ENCODE measurements at regions of chr4 and their contacts with region 1.

Region 1: GRCh38 chr4:150242820-150243458 is 164.7 kb downstream of the DCLK2 start:
- DNase-seq: peak in 1 of 2 experiments; percentile 51
- H3K4me3 ChIP-seq: no peak overlapping the region
- H3K4me3 Mint-ChIP-seq: no peak overlapping the region
- H3K27ac Mint-ChIP-seq: no peak overlapping the region
- H3K4me1 ChIP-seq: no peaks in the 10 kb centered on the region
- H3K4me1 Mint-ChIP-seq: no peaks in the 10 kb centered on the region
- H3K27me3 ChIP-seq: no peaks in the 10 kb centered on the region
- H3K27me3 Mint-ChIP-seq: no peaks in the 10 kb centered on the region
- CTCF ChIP-seq: peak; percentile 80 to 88

Region 2: GRCh38 chr4:149914119-149915115 is 328.5 kb before region 1 on chr4:
- CTCF ChIA-PET with region 1: no interaction called
- POLR2A ChIA-PET with region 1: no interaction called
- intact Hi-C with region 1: loop called (anchors 5 kb)
- DNase-seq: peak; percentile 46 to 62
- H3K4me3 ChIP-seq: no peak overlapping the region
- H3K4me3 Mint-ChIP-seq: no peak overlapping the region
- H3K27ac Mint-ChIP-seq: no peak overlapping the region
- H3K4me1 ChIP-seq: no peaks in the 10 kb centered on the region
- H3K4me1 Mint-ChIP-seq: no peaks in the 10 kb centered on the region
- H3K27me3 ChIP-seq: no peaks in the 10 kb centered on the region
- H3K27me3 Mint-ChIP-seq: no peaks in the 10 kb centered on the region
- CTCF ChIP-seq: peak; percentile 59 to 67

Region 3: GRCh38 chr4:149980941-149981340 is 262.0 kb before region 1 on chr4:
- CTCF ChIA-PET with region 1: no interaction called
- POLR2A ChIA-PET with region 1: no interaction called
- intact Hi-C with region 1: loop called (anchors 1 kb)
- DNase-seq: peak; percentile 35 to 50
- H3K4me3 ChIP-seq: no peak overlapping the region
- H3K4me3 Mint-ChIP-seq: no peak overlapping the region
- H3K27ac Mint-ChIP-seq: no peak overlapping the region
- H3K4me1 ChIP-seq: no peaks in the 10 kb centered on the region
- H3K4me1 Mint-ChIP-seq: no peaks in the 10 kb centered on the region
- H3K27me3 ChIP-seq: no peaks in the 10 kb centered on the region
- H3K27me3 Mint-ChIP-seq: peaks cover 7% of the 10 kb centered on the region
- CTCF ChIP-seq: peak; percentile 68

Region 4: GRCh38 chr4:149999485-150000074 is 243.4 kb before region 1 on chr4:
- CTCF ChIA-PET with region 1: interaction called, 3 read pairs
- POLR2A ChIA-PET with region 1: no interaction called
- intact Hi-C with region 1: loop called (anchors 1 kb)
- DNase-seq: peak in 1 of 2 experiments; percentile 31
- H3K4me3 ChIP-seq: no peak overlapping the region
- H3K4me3 Mint-ChIP-seq: no peak overlapping the region
- H3K27ac Mint-ChIP-seq: no peak overlapping the region
- H3K4me1 ChIP-seq: no peaks in the 10 kb centered on the region
- H3K4me1 Mint-ChIP-seq: no peaks in the 10 kb centered on the region
- H3K27me3 ChIP-seq: no peaks in the 10 kb centered on the region
- H3K27me3 Mint-ChIP-seq: no peaks in the 10 kb centered on the region
- CTCF ChIP-seq: peak; percentile 54 to 64

Region 5: GRCh38 chr4:150010525-150011126 is 232.3 kb before region 1 on chr4:
- CTCF ChIA-PET with region 1: interaction called, 3 read pairs
- POLR2A ChIA-PET with region 1: no interaction called
- intact Hi-C with region 1: loop called (anchors 1 kb)
- DNase-seq: peak; percentile 42 to 47
- H3K4me3 ChIP-seq: no peak overlapping the region
- H3K4me3 Mint-ChIP-seq: no peak overlapping the region
- H3K27ac Mint-ChIP-seq: no peak overlapping the region
- H3K4me1 ChIP-seq: no peaks in the 10 kb centered on the region
- H3K4me1 Mint-ChIP-seq: no peaks in the 10 kb centered on the region
- H3K27me3 ChIP-seq: no peaks in the 10 kb centered on the region; the same call in none of the 2 replicates
- H3K27me3 Mint-ChIP-seq: no peaks in the 10 kb centered on the region
- CTCF ChIP-seq: peak; percentile 21 to 53

Region 6: DNA sequence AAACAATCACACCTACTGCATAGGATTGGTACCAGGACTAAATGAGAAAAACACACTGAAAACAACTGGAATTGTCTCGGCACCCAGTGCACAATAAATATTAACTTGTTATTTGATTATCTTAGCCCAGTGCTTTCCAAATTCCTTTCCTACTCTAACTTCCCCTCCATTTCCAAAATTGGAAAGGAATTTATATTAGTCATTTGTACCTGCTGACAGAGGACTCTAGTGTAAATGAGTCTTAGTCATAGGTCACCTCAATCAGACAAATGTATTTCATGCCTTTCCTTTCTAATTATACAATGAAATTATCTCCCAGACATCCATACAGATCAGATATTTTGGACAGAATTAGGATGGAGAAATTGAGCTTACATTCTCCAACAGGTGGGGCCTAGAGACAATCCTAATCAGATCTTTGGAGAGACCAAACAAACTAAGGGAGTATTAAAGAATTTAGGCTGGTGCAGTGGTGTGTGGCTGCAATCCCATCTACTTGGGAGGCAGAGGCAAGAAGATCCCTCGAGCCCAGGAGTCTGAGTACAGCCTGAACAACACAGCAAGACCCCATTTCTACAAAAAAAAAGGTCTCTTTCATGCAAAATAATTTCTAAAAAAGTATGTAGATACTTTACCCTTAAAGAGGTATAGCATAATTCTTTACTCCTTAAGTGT is 1072.4 kb after region 1 on chr4:
- CTCF ChIA-PET with region 1: no interaction called
- POLR2A ChIA-PET with region 1: no interaction called
- intact Hi-C with region 1: no loop called
- DNase-seq: no peak
- H3K4me3 ChIP-seq: no peak overlapping the region
- H3K4me3 Mint-ChIP-seq: peak overlapping the region; percentile 24
- H3K27ac Mint-ChIP-seq: peak overlapping the region; percentile 62
- H3K4me1 ChIP-seq: peaks cover 45% of the 10 kb centered on the region
- H3K4me1 Mint-ChIP-seq: peaks cover 46% of the 10 kb centered on the region
- H3K27me3 ChIP-seq: no peaks in the 10 kb centered on the region
- H3K27me3 Mint-ChIP-seq: no peaks in the 10 kb centered on the region
- CTCF ChIP-seq: no peak

Measured in Caco-2 (cell line).